Mammary epithelial cell (primary cell): ENCODE measurements at regions of chr7 and their contacts with region 1.

Region 1: DNA sequence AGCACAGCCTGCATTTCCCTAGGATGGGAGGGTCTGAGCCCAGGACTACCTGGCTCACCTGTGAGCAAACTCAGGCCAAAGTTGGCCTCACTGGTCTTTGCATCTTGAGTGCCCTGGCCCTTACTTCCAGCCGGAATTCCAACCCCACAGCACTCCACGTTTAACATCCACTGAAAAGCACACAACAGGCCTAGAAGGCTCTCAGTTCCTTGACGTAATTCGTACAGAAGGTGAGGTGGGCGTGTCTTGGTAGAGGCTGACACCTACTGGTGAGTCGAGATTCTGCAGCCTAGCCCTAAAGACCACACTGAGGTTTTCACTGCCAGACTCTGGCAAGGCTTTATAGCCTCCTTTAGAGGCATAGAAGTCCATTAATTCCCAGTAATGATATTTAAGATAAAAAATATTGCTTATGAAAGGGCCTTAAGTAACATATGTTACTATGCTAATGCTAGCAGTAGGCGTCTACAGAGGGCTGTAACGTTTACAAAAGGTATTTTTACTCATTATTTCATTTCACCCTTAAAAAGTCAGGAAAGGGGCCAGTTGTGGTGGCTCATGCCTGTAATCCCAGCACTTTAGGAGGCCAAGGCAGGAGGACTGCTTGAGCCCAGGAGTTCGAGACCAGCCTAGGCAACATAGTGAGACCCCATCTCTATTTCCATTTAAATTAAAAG is 95.8 kb downstream of the HIP1 start:
- DNase-seq: peak; percentile 50
- H3K4me3 ChIP-seq: no peak overlapping the region
- H3K27ac ChIP-seq: no peak overlapping the region
- H3K4me1 ChIP-seq: peaks cover 9% of the 10 kb centered on the region
- H3K27me3 ChIP-seq: no peaks in the 10 kb centered on the region
- CTCF ChIP-seq: peak; percentile 83 to 94

Region 2: GRCh38 chr7:75531359-75531821 is 111.6 kb before region 1 on chr7:
- CTCF ChIA-PET with region 1: no interaction called
- dilution Hi-C with region 1: no loop called
- in situ Hi-C with region 1: no loop called
- intact Hi-C with region 1: loop called (anchors 5 kb)
- DNase-seq: peak; percentile 43
- H3K4me3 ChIP-seq: no peak overlapping the region
- H3K27ac ChIP-seq: no peak overlapping the region
- H3K4me1 ChIP-seq: peaks cover 2% of the 10 kb centered on the region
- H3K27me3 ChIP-seq: no peaks in the 10 kb centered on the region
- CTCF ChIP-seq: no peak

Region 3: GRCh38 chr7:75546237-75547015 is 96.5 kb before region 1 on chr7:
- CTCF ChIA-PET with region 1: no interaction called
- dilution Hi-C with region 1: no loop called
- in situ Hi-C with region 1: no loop called
- intact Hi-C with region 1: no loop called
- DNase-seq: no peak
- H3K4me3 ChIP-seq: no peak overlapping the region
- H3K27ac ChIP-seq: no peak overlapping the region
- H3K4me1 ChIP-seq: no peaks in the 10 kb centered on the region
- H3K27me3 ChIP-seq: no peaks in the 10 kb centered on the region
- CTCF ChIP-seq: no peak

Region 4: GRCh38 chr7:75572396-75572795 is 70.6 kb before region 1 on chr7:
- CTCF ChIA-PET with region 1: no interaction called
- dilution Hi-C with region 1: loop called (anchors 5 kb)
- in situ Hi-C with region 1: no loop called
- intact Hi-C with region 1: no loop called
- DNase-seq: no peak
- H3K4me3 ChIP-seq: no peak overlapping the region
- H3K27ac ChIP-seq: no peak overlapping the region
- H3K4me1 ChIP-seq: no peaks in the 10 kb centered on the region
- H3K27me3 ChIP-seq: peaks cover 2% of the 10 kb centered on the region
- CTCF ChIP-seq: no peak

Region 5: DNA sequence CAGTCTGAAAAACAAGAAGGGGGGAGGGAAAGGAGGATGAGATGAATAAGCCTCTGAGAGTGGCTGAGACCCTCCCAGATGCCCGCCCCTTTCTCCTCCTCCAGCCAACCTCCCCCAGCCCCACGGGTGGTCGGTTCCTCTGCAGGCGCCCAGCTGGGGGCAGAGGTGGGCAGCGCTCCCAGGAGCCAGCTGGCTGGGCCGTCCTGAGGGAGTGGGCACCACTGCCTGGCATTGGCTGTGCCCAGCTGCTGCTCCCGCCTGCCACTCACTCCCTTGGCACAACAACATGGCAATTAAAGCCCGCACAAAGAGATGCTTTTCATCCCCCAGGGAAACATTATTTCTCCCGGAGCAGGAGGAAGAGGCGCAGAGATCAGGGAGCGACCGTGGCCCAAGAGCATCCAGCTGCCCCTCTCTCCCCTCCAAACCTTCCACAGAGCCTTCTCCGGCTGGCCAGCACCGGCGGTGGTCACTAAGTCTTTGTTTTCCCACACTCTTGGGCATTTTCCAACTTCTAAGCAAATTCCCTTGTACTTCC is 43.6 kb before region 1 on chr7:
- CTCF ChIA-PET with region 1: no interaction called
- dilution Hi-C with region 1: loop called (anchors 5 kb)
- in situ Hi-C with region 1: no loop called
- intact Hi-C with region 1: no loop called
- DNase-seq: no peak
- H3K4me3 ChIP-seq: no peak overlapping the region
- H3K27ac ChIP-seq: no peak overlapping the region
- H3K4me1 ChIP-seq: peaks cover 6% of the 10 kb centered on the region
- H3K27me3 ChIP-seq: no peaks in the 10 kb centered on the region
- CTCF ChIP-seq: no peak

Region 6: DNA sequence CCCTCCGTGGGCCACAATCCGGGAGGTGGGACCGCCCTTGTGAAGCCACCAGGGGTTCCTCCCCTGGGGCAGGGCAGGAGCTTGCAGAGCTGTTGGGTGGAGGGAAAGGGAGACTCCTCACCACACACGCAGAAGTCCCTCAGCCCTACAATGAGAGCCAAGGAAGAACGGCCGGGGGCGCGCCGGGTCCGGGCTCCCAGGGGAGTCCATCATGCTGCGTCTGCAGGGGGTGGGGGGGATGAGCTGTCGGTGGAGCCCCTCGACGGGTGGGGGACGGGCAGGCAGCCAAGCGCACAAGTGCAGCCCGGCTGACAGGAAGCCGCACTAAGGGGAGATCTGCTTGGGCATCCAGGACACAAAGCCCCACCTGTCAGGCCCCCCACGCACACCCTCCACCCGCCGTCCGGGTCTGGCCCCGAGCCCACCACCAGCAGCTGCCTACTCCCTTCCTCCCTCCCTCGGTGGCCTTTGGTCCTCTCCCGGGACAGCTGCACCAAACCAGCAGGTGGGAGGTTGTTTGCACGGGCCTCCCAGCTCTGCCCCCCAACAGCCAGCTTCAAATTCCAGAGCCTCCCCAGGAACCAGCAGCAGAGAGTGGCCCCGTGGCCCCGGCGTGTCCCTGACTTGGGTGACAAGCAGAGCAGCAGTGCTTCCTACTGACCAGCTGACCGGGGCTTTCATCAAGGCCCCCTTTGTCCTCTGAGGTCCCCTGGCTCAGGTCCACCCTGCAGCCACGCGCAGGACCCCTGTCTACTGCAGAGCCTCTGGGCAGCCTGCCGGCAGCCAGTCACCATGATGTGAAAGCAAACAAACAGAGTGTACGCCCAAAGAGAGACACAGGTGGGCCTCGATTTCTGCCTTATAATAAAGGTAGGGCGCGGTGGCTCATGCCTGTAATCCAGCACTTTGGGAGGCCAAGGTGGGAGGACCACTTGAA is 45.5 kb after region 1 on chr7:
- CTCF ChIA-PET with region 1: no interaction called
- dilution Hi-C with region 1: loop called (anchors 5 kb)
- in situ Hi-C with region 1: no loop called
- intact Hi-C with region 1: no loop called
- DNase-seq: no peak
- H3K4me3 ChIP-seq: no peak overlapping the region
- H3K27ac ChIP-seq: no peak overlapping the region
- H3K4me1 ChIP-seq: no peaks in the 10 kb centered on the region
- H3K27me3 ChIP-seq: no peaks in the 10 kb centered on the region
- CTCF ChIP-seq: no peak

Region 7: DNA sequence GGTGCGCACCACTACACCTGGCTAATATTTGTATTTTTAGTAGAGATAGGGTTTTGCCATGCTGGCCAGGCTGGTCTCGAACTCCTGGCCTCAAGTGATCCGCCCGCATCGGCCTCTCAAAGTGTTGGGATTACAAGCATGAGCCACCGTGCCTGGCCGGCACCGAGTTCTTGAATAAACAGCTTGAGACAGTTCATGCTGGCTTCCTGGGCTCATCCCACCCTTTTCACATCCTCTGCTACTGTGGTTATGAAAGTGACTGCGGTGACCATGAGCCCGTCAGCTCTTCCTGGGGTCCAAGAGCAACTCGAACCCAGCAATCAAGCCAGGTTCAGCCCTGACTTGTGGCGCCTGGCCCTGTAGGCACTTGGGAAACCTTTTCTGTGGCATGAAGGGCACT is 57.0 kb after region 1 on chr7:
- CTCF ChIA-PET with region 1: no interaction called
- dilution Hi-C with region 1: no loop called
- in situ Hi-C with region 1: no loop called
- intact Hi-C with region 1: no loop called
- DNase-seq: no peak
- H3K4me3 ChIP-seq: no peak overlapping the region
- H3K27ac ChIP-seq: no peak overlapping the region
- H3K4me1 ChIP-seq: no peaks in the 10 kb centered on the region
- H3K27me3 ChIP-seq: no peaks in the 10 kb centered on the region
- CTCF ChIP-seq: no peak

Region 8: GRCh38 chr7:75762314-75762917 is 119.5 kb after region 1 on chr7:
- CTCF ChIA-PET with region 1: no interaction called
- dilution Hi-C with region 1: no loop called
- in situ Hi-C with region 1: no loop called
- intact Hi-C with region 1: loop called (anchors 2 kb)
- DNase-seq: peak; percentile 40
- H3K4me3 ChIP-seq: no peak overlapping the region
- H3K27ac ChIP-seq: no peak overlapping the region
- H3K4me1 ChIP-seq: no peaks in the 10 kb centered on the region
- H3K27me3 ChIP-seq: no peaks in the 10 kb centered on the region
- CTCF ChIP-seq: peak; percentile 77